Posterior cingulate gyrus (tissue), 11 donors: ENCODE measurements at regions of chr6 and their contacts with region 1.

Region 1: GRCh38 chr6:41779793-41780545 is at the start of gene FRS3:
- DNase-seq: peak; percentile 99 to 100 (median 100)

Region 2: DNA sequence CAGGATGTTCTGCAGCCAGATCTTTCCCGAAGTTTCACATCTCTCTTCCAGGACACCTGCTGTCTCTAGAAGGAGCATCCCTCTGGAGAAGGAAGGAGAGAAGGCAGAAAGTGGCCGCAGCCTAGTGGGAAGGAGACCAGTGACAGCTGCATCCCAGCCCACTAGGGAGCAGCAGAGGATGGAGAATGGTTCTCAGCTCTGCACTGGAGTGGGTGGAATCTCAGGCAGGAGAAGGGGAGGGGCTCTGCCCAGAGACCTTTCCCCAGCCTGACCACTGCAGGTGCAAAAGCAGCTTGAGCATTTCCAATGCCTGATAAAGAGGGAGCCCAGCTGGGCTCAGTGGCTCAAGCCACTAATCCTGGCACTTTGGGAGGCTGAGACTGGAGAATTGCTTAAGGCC is 412.3 kb before region 1 on chr6:
- intact Hi-C with region 1: loop called (anchors 2 kb)
- DNase-seq: peak; percentile 56 to 96 (median 78)

Region 3: GRCh38 chr6:41602864-41603608 is 176.9 kb before region 1 on chr6:
- intact Hi-C with region 1: loop called (anchors 2 kb)
- DNase-seq: peak; percentile 62 to 96 (median 84)

Region 4: GRCh38 chr6:41683510-41684310 is 96.3 kb before region 1 on chr6:
- intact Hi-C with region 1: loop called (anchors 5 kb)
- DNase-seq: peak; percentile 71 to 98 (median 86)

Region 5: GRCh38 chr6:41735427-41736356 is 44.3 kb before region 1 on chr6 and contains the start of gene TFEB:
- intact Hi-C with region 1: loop called (anchors 5 kb)
- DNase-seq: peak; percentile 95 to 99 (median 96)

Region 6: GRCh38 chr6:42043787-42044475 is 264.0 kb after region 1 on chr6:
- intact Hi-C with region 1: loop called (anchors 1 kb)
- DNase-seq: peak; percentile 75 to 98 (median 93)